ENCODE measurements at regions of chr2 and their contacts with region 1.

Region 1: DNA sequence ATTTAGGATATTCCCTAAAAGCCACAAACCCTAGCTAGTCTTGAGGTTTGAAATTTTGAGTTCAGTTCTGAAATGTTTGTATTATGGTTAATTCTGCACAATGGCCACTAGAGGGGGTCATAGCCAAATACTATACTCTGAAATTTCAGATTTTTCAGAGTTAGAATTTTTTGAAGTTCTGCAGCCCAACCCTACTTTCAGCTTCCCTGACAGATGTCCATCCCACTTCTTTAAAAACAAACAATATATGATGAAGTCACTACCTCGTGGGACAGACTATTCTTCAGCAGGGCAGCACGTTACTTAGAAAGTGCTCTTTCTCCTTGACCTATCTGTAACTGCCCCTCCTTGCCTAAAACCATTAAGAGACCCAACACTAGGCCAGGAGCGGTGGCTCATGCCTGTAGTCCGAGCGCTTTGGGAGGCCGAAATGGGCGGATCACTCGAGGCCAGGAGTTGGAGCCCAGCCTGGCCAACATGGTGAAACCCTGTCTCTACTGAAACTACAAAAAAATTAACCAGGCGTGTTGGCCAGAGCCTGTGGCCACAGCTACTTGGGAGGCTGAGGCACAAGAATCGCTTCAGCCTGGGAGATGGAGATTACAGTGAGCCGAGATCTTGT is 48.2 kb upstream of the PAPOLG start:
- DNase-seq: no peak
- H3K4me3 ChIP-seq: no peak overlapping the region
- H3K27ac ChIP-seq: no peak overlapping the region
- H3K4me1 ChIP-seq: no peaks in the 10 kb centered on the region
- H3K27me3 ChIP-seq: no peaks in the 10 kb centered on the region
- CTCF ChIP-seq: peak; percentile 51 to 77 (median 71)
- POLR2A ChIP-seq: no peak

Region 2: DNA sequence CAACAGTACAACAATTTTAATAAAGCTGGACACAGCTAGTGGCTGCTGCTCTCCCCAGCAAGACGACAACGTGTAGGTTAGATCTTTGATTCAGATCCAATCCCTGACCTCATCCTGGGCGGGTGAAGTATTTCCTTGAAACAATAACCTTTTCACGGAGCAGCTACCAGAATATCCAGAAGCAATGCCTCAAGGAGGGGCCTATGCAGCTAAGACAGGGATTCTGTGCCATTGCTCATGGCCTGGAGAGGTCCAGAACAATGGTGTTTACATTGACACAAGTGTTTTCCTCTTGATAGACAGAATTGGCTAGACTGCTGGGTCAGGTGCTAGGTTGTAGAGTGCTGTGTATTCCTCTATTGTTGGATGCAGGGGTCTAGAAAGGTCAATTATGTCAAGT is 674.5 kb before region 1 on chr2:
- intact Hi-C with region 1: no loop called
- DNase-seq: no peak
- H3K4me3 ChIP-seq: no peak overlapping the region
- H3K27ac ChIP-seq: no peak overlapping the region
- H3K4me1 ChIP-seq: no peaks in the 10 kb centered on the region
- H3K27me3 ChIP-seq: no peaks in the 10 kb centered on the region
- CTCF ChIP-seq: no peak
- POLR2A ChIP-seq: no peak

Region 3: DNA sequence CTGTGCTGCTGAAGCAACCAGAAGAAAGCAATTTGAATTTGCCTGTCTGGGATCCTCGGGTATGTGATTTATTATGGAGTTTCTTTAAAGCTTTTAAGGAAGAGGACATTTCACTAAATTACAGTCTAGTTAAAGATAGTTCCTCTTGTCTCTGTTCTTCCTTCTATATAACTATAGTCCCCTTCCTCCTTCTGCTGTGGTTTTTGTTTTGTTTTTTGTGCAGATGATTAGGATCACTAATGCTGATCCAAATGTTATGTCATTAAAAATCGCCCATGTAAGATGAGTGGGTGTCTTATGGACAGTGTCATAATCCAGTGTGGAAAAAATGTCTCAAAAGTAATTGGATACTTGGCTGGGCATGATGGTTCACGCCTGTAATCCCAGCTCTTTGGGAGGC is 72.9 kb after region 1 on chr2:
- intact Hi-C with region 1: loop called (anchors 10 kb)
- DNase-seq: no peak
- H3K4me3 ChIP-seq: no peak overlapping the region
- H3K27ac ChIP-seq: no peak overlapping the region
- H3K4me1 ChIP-seq: no peaks in the 10 kb centered on the region
- H3K27me3 ChIP-seq: no peaks in the 10 kb centered on the region
- CTCF ChIP-seq: no peak
- POLR2A ChIP-seq: no peak

Region 4: GRCh38 chr2:60998628-60999545 is 291.0 kb after region 1 on chr2:
- intact Hi-C with region 1: loop called (anchors 5 kb)
- DNase-seq: no peak
- H3K4me3 ChIP-seq: no peak overlapping the region
- H3K27ac ChIP-seq: no peak overlapping the region
- H3K4me1 ChIP-seq: no peaks in the 10 kb centered on the region
- H3K27me3 ChIP-seq: no peaks in the 10 kb centered on the region
- CTCF ChIP-seq: peak; percentile 29 to 79 (median 55)
- POLR2A ChIP-seq: no peak

Region 5: GRCh38 chr2:61277756-61278155 is 569.9 kb after region 1 on chr2:
- intact Hi-C with region 1: no loop called
- DNase-seq: no peak
- H3K4me3 ChIP-seq: no peak overlapping the region
- H3K27ac ChIP-seq: no peak overlapping the region
- H3K4me1 ChIP-seq: peaks cover 0 to 4% (median 0%) of the 10 kb centered on the region in 3 donors
- H3K27me3 ChIP-seq: no peaks in the 10 kb centered on the region
- CTCF ChIP-seq: no peak
- POLR2A ChIP-seq: no peak